Endothelial cell of umbilical vein (primary cell): ENCODE measurements at regions of chr4 and their contacts with region 1.

Region 1: DNA sequence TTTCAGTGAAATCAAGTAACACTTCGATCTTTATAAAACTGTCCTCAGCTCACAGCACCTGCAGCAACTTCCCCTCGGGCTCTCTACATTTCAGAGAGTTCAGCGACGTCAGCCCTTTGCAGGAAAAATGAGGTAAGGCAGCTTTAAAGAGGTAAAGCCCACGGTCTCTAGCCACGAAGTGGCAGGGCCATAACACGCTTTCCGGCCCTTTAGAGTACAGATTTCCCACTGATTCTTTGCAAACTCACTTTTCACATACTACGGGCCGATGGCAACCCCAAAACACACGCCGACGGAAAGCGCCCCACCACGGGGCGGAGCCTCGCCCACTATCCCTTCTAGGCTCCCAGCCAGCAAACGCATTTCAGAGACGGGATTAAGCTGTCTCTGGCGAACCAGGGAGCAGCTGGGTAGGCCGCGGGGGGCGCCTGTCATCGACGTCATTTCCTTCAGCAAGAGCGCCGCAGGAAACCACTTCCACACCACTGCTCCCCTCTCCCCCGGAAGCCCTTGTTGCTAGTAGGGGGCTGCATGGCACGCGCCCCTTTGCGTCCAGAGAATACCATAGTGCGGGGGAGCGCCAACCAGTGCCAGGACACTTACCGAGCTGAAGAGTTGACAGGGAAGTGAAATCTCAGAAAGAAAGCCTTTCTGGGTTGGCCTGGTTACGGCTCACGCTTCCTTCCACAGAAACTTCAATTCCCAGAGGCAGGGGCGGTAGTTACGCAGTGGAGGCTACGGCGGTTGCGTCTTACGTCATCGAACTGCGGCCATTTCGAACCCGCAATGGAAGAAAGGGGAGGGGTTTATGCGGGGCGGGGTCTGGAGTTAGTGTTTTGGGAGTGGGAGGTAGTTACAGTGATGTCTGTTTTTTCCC is at the start of gene TRMT10A:
- DNase-seq: peak; percentile 98
- H3K4me3 ChIP-seq: peak within 1 kb of the TSS; percentile 38 to 85 (median 73)
- H3K27ac ChIP-seq: peak within 1 kb of the TSS; percentile 90
- H3K4me1 ChIP-seq: peaks cover 6% of the 10 kb centered on the region
- H3K27me3 ChIP-seq: peaks cover 3 to 11% of the 10 kb centered on the region in 2 experiments
- CTCF ChIP-seq: no peak
- POLR2A ChIP-seq: no peak
- total RNA-seq, gene TRMT10A: 6.5 and 8.4 TPM in 2 replicates

Region 2: GRCh38 chr4:98260579-98261290 is 1302.8 kb before region 1 on chr4:
- CTCF ChIA-PET with region 1: no interaction called
- POLR2A ChIA-PET with region 1: no interaction called
- dilution Hi-C with region 1: no loop called
- intact Hi-C with region 1: loop called (anchors 5 kb)
- DNase-seq: peak; percentile 98
- H3K4me3 ChIP-seq: peak overlapping the region; percentile 73 to 76 (median 73)
- H3K27ac ChIP-seq: peak overlapping the region; percentile 86
- H3K4me1 ChIP-seq: peaks cover 22% of the 10 kb centered on the region
- H3K27me3 ChIP-seq: no peaks in the 10 kb centered on the region
- CTCF ChIP-seq: no peak
- POLR2A ChIP-seq: peak; percentile 94

Region 3: DNA sequence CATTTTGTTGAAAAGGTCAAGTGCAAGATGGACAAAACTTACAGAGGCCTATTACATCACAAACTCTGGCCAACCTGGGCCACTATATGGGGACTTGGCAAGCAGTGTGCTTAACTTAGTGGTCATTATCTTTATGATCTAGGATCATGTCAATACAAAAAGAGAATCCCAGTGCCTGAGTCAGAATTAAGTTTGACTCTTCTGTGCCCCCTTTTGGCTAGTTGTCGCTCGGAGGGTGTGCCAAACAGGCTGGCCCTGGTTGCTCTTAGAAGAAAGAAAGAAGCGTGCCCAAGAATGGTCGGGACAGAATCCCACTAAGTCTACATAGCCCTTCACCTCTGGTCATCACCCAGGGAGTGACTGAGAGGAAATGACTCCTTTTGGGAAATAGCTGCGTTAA is 734.7 kb before region 1 on chr4:
- CTCF ChIA-PET with region 1: no interaction called
- POLR2A ChIA-PET with region 1: no interaction called
- dilution Hi-C with region 1: no loop called
- intact Hi-C with region 1: no loop called
- DNase-seq: no peak
- H3K4me3 ChIP-seq: no peak overlapping the region
- H3K27ac ChIP-seq: no peak overlapping the region
- H3K4me1 ChIP-seq: peaks cover 12% of the 10 kb centered on the region
- H3K27me3 ChIP-seq: no peaks in the 10 kb centered on the region
- CTCF ChIP-seq: no peak
- POLR2A ChIP-seq: no peak

Region 4: DNA sequence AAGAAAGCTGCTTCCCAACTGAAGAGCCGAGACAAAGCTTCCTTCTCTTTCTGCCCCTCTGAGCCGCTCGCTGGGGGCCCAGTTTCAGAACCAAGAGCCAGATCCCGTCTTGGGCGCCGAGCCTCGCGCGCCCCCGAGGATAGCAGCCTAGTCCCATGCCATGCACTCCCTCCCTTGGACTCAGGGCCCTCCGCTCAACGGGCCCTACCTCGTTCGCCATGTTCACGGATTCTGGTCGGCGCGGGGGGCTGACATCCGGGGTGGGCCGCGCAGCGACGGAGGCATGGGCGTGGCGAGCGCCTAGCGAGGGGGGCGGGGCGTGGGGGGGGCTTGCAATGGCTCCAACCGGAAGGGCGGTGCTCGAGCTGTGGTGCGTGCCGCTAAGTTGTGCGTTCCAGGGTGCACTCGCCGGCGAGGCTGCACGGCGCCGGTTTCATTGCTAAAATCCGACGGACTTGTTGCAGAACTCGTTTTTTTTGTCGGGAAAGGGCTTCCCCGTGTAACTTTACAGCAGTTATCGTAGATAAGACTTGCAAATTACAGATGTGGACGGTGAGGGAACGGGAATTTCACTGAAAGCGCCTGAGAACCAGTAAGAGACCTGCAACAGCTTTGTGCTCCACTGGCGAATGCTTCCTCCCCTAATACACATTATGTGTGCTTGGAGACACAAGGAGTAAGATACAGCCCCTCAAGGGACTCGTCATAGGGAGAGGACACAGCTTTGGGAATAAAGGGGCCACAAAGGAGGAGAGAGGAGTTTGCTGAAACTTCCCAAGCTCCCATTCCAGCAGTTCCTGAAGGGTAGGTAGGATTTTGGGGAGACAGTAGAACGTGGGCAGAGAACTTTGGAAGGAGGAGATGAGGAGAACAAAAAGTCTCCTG is 474.8 kb before region 1 on chr4 and contains the start of gene ADH5:
- CTCF ChIA-PET with region 1: no interaction called
- POLR2A ChIA-PET with region 1: no interaction called
- dilution Hi-C with region 1: no loop called
- intact Hi-C with region 1: loop called (anchors 1 kb)
- DNase-seq: peak; percentile 72
- H3K4me3 ChIP-seq: peak within 1 kb of the TSS; percentile 80 to 98 (median 82)
- H3K27ac ChIP-seq: peak within 1 kb of the TSS; percentile 66
- H3K4me1 ChIP-seq: peaks cover 8% of the 10 kb centered on the region
- H3K27me3 ChIP-seq: no peaks in the 10 kb centered on the region
- CTCF ChIP-seq: no peak
- POLR2A ChIP-seq: peak; percentile 91
- total RNA-seq, gene ADH5: 101 and 103 TPM in 2 replicates

Region 5: DNA sequence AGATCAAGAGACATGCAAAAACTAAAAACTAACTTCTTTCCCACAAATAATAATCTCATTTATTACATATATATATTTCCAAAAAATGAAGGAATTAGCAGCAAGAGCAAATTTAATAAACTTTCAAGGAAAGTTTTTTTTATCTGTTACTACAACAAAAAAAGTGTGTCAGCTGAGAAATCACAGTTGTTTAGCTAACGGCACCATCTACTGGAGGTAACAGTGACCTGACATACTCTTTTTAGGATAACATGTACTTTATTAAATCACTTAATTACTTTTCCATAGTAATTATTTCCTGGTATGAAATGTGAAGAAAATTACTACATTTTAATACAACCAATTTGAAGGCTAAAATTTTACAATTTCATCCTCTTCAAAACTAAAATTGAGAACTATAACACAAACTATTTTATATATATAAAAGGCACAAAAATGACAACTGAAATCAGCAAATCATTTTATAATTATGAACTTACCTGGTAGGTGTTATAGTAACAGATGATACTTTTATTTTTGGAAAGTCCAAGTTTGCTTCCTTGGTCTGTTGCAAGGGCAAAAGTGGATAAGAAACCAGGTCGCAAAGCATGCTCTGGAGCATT is 321.6 kb after region 1 on chr4:
- CTCF ChIA-PET with region 1: no interaction called
- POLR2A ChIA-PET with region 1: no interaction called
- dilution Hi-C with region 1: no loop called
- intact Hi-C with region 1: loop called (anchors 2 kb)
- DNase-seq: peak; percentile 33
- H3K4me3 ChIP-seq: no peak overlapping the region
- H3K27ac ChIP-seq: no peak overlapping the region
- H3K4me1 ChIP-seq: no peaks in the 10 kb centered on the region
- H3K27me3 ChIP-seq: no peaks in the 10 kb centered on the region
- CTCF ChIP-seq: peak in 1 of 2 donors; percentile 20
- POLR2A ChIP-seq: no peak

Region 6: GRCh38 chr4:99949034-99949998 is 385.8 kb after region 1 on chr4:
- CTCF ChIA-PET with region 1: interaction called, 16 read pairs
- POLR2A ChIA-PET with region 1: interaction called, 7 read pairs
- dilution Hi-C with region 1: no loop called
- intact Hi-C with region 1: loop called (anchors 1 kb)
- DNase-seq: peak; percentile 91
- H3K4me3 ChIP-seq: peak overlapping the region; percentile 66 to 87 (median 86)
- H3K27ac ChIP-seq: peak overlapping the region; percentile 75
- H3K4me1 ChIP-seq: peaks cover 38% of the 10 kb centered on the region
- H3K27me3 ChIP-seq: no peaks in the 10 kb centered on the region
- CTCF ChIP-seq: peak; percentile 83 to 91
- POLR2A ChIP-seq: no peak